Dorsolateral prefrontal cortex (tissue), 120 donors: ENCODE measurements at regions of chr11 and their contacts with region 1.

Region 1: DNA sequence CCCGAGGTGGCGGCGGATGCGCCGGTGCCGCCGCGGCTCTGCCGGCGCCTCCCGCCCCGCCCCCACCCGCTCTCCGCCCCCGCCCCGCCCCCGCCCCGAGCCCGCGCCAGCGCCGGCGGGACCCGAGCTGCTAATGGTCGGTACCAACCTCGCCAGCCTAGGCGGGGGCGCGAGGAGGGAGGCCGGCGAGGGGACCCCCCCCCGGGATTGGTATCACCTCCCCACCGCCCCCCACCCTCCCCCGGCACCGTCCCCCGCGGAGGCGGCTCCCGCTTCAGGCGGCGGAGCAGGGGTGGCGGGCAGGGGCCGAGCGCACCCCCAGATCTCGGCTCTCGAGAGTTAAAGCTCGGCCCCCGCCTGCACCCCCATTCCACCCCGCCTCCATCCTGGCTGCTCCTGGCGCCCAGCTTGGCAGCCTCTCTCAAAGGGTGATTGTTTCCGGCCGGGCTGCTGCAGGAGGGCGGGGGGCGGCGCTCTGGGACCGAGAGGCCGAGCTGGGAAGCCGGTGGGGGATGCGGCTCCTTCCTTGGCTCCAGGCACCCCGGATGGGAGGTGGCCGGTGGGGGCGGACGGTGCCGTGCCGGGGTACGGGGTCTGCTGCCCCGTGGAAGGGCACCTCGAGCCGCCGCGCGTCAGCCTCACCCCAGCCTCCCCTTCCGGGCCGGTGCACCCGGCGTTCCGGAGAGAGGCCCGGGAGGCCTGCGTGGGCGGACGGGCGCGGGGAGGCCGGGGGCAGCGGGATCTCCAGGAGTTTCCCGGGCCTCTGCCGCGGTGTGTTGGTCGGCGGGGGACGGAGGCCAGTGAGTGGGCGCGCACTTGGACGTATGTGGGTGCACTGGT is at the start of gene B3GAT1:
- DNase-seq: peak; percentile 46 to 95 (median 92)
- H3K4me3 ChIP-seq: peak within 1 kb of the TSS; percentile 59 to 89 (median 78)
- H3K27ac ChIP-seq: peak within 1 kb of the TSS; percentile 79 to 100 (median 98)
- H3K27me3 ChIP-seq: peaks cover 0 to 3% (median 0%) of the 10 kb centered on the region in 45 donors
- CTCF ChIP-seq: peak in 46 of 56 donors; percentile 11 to 59 (median 36)
- total RNA-seq, gene B3GAT1: 204 to 380 (median 266) TPM

Region 2: GRCh38 chr11:134282121-134283045 is 130.0 kb before region 1 on chr11:
- intact Hi-C with region 1: no loop called
- DNase-seq: no peak
- H3K4me3 ChIP-seq: no peak overlapping the region
- H3K27ac ChIP-seq: no peak overlapping the region
- H3K27me3 ChIP-seq: peaks cover 0 to 12% (median 0%) of the 10 kb centered on the region in 45 donors
- CTCF ChIP-seq: no peak

Region 3: GRCh38 chr11:134393638-134394037 is 18.8 kb before region 1 on chr11:
- intact Hi-C with region 1: loop called (anchors 1 to 2 kb)
- DNase-seq: peak; percentile 19 to 77 (median 72)
- H3K4me3 ChIP-seq: peak overlapping the region in 2 of 59 donors; percentile 2 to 12
- H3K27ac ChIP-seq: peak overlapping the region in 57 of 59 donors; percentile 1 to 98 (median 75)
- H3K27me3 ChIP-seq: no peaks in the 10 kb centered on the region
- CTCF ChIP-seq: peak in 54 of 56 donors; percentile 21 to 80 (median 64)

Region 4: GRCh38 chr11:134449713-134450112 is 37.3 kb after region 1 on chr11:
- intact Hi-C with region 1: loop called in 1 of 2 experiments (anchors 2 kb)
- DNase-seq: peak in 1 of 10 donors; percentile 29
- H3K4me3 ChIP-seq: no peak overlapping the region
- H3K27ac ChIP-seq: no peak overlapping the region
- H3K27me3 ChIP-seq: no peaks in the 10 kb centered on the region
- CTCF ChIP-seq: no peak

Region 5: GRCh38 chr11:134498326-134499139 is 86.1 kb after region 1 on chr11:
- intact Hi-C with region 1: no loop called
- DNase-seq: peak in 8 of 10 donors; percentile 43 to 71 (median 58)
- H3K4me3 ChIP-seq: no peak overlapping the region
- H3K27ac ChIP-seq: peak overlapping the region in 16 of 59 donors; percentile 3 to 72 (median 39)
- H3K27me3 ChIP-seq: peaks cover 0 to 5% (median 0%) of the 10 kb centered on the region in 45 donors
- CTCF ChIP-seq: no peak

Region 6: DNA sequence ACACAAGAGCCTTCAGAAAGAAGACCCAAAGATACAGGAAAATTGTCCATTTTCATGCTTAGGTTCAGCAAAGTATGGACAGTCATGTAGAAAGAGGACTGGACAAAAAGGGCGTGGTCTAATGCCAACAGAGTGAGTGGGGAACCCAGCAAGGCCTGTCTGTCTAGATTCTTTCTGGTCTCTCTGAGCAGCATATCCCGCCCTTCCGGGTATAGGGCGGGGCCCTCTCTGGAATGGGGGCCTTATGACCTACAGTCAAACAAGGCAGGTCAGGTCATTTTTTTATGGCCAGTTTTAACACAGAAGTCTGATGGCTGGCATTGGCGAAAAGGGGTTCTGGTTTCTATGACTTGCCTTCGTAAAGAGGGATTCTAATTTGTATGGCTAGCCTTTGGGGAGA is 130.0 kb after region 1 on chr11:
- intact Hi-C with region 1: no loop called
- DNase-seq: no peak
- H3K4me3 ChIP-seq: no peak overlapping the region
- H3K27ac ChIP-seq: peak overlapping the region in 2 of 59 donors; percentile 3 to 14
- H3K27me3 ChIP-seq: no peaks in the 10 kb centered on the region
- CTCF ChIP-seq: no peak

Region 7: DNA sequence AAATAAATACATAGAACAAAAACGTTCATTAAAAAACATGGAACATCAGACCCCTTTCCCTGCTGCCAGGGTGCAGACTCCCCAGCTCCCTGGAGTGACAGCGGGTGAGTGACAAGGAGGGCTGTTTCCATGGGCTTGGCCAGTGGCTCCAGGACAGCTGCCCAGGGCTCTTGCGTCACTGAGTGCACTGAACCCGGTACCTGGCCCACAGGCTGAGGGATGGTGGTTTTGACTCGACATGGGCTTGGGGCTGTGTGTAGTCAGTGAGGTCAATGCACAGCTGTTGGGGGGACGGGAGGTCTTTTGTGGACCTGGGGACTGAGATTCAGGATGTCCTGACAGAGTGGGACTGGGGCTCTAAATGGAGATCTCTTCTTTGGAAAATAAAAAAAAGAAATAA is 141.7 kb after region 1 on chr11:
- intact Hi-C with region 1: no loop called
- DNase-seq: no peak
- H3K4me3 ChIP-seq: no peak overlapping the region
- H3K27ac ChIP-seq: no peak overlapping the region
- H3K27me3 ChIP-seq: no peaks in the 10 kb centered on the region
- CTCF ChIP-seq: no peak

Region 8: GRCh38 chr11:134566311-134566710 is 153.9 kb after region 1 on chr11:
- intact Hi-C with region 1: loop called in 1 of 2 experiments (anchors 5 kb)
- DNase-seq: peak in 4 of 10 donors; percentile 41 to 68 (median 60)
- H3K4me3 ChIP-seq: no peak overlapping the region
- H3K27ac ChIP-seq: peak overlapping the region in 1 of 59 donors; percentile 13
- H3K27me3 ChIP-seq: no peaks in the 10 kb centered on the region
- CTCF ChIP-seq: peak in 23 of 56 donors; percentile 6 to 63 (median 28)